Posterior vena cava (tissue), 2 donors: ENCODE measurements at regions of chr11 and their contacts with region 1.

Region 1: GRCh38 chr11:66950113-66950535 is 8.1 kb downstream of the PC start:
- DNase-seq: no peak

Region 2: DNA sequence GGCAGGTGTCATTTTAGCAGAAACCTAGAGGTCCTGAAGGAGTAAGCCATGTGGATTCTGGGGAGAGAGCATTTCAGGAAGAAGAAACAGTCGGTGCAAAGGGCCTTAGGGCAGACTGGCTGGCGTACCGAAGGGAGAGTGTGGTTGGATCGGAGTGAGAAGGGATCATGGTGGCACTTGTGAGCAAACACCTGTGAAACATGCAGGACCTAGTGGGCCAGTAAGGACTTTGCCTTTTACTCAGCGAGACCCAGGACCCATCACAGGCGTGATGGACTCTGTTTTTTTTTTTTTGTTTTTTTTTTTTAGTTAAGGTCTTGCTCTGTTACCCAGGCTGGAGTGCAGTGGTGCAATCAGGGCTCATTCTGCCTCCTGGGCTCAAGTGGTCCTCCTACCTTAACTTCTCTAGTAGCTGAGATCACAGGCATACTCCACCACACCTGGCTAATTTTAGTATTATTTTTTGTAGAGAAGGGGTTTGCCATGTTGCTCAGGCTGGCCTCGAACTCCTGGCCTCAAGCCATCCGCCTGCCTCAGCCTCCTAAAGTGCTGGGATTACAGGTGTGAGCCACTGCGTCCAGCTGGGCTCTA is 1008.3 kb before region 1 on chr11:
- intact Hi-C with region 1: loop called in 1 of 2 experiments (anchors 5 kb)
- DNase-seq: no peak